ENCODE measurements at regions of chr16 and their contacts with region 1.

Region 1: DNA sequence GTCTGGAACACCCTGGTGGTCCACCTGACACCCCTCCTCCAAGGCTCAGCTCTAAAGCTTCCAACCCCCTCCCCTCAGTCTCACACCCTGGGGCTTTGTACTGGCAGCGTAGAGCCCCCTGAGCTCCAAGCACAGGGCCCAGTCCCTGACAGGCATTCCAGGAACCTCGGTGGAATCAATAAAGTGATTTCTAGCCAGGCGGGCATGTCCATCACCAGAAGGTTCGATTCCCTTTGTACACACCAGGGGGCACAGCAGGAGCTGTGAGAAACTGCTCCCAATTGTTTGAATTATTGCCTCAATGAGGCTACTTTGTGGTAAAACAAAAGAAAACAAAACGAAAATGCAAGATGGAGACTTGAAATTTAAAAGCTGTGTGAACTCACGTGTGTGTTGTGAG is 51.8 kb downstream of the SMPD3 start:
- DNase-seq: peak; percentile 72
- H3K4me3 Mint-ChIP-seq: no peak overlapping the region
- H3K27ac Mint-ChIP-seq: peak overlapping the region; percentile 27
- H3K4me1 Mint-ChIP-seq: peaks cover 18% of the 10 kb centered on the region
- H3K27me3 Mint-ChIP-seq: no peaks in the 10 kb centered on the region

Region 2: GRCh38 chr16:68406451-68407152 is 10.1 kb after region 1 on chr16:
- CTCF ChIA-PET with region 1: interaction called, 16 read pairs
- intact Hi-C with region 1: no loop called
- DNase-seq: no peak
- H3K4me3 Mint-ChIP-seq: no peak overlapping the region
- H3K27ac Mint-ChIP-seq: no peak overlapping the region
- H3K4me1 Mint-ChIP-seq: peaks cover under 1% of the 10 kb centered on the region
- H3K27me3 Mint-ChIP-seq: no peaks in the 10 kb centered on the region

Region 3: DNA sequence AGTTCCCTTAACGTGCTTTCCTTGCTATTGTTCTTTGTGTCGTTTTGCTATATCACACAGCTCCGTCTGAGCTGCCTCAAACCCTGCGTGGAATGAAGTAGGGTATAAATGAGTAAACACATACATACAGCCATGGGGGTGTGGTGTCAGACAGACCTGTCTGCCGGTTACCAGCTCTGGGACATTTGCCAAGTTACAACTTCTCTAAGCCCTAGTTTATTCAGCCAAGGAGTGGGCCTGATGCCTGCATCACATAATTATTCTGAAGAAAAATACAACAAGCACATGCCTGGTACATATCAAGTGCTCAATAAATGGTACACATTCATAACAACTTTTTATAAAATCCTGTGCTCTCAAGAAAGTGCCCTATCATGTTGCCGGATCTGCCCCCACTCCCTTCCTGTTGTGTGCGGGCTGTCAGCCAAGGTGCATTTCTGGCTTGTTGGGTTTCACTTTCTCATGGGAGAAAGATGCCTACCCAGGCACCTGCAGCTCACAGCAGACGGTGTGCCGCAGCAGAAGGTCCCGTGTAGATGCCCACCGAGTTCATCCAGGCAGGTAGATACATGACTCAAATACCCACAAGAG is 21.3 kb after region 1 on chr16:
- CTCF ChIA-PET with region 1: interaction called, 11 read pairs
- intact Hi-C with region 1: loop called (anchors 2 kb)
- DNase-seq: peak; percentile 89
- H3K4me3 Mint-ChIP-seq: peak overlapping the region; percentile 66
- H3K27ac Mint-ChIP-seq: peak overlapping the region; percentile 92
- H3K4me1 Mint-ChIP-seq: peaks cover 52% of the 10 kb centered on the region
- H3K27me3 Mint-ChIP-seq: no peaks in the 10 kb centered on the region

Region 4: DNA sequence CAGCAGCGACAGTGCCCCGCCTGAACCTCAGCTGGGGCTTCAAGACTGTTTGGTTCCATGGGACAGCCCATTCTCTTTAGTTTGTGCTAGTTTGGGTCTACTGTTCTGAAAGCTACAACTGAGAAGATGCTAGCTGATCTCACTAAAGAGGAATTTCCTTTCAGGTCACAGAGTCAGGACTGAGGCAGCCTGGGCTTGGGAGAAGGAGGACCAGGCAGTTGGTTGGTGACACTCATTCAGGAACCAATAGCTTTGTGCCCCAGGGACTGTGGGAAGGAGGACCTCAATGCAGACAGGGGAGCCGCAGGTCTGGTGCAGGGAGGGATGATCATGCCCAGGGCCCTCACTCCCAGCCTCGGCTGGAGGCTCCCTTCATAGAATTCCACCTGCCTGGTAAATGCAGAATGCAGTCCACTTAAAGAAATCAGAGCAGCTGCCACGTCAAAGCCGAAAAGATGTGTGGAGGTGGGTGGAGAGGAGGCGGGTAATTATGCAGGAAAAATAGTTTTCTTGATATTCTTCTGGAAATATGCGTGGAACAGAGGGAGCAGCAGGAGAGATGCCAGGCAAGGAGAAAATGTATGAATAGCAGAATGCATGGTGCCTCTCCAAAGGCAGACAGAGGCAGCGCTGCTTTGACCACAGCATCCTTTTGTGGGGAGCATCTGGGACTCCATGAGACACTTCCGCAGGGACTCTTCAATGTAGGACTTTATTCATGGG is 110.0 kb after region 1 on chr16:
- CTCF ChIA-PET with region 1: interaction called, 56 read pairs
- intact Hi-C with region 1: loop called (anchors 1 kb)
- DNase-seq: no peak
- H3K4me3 Mint-ChIP-seq: no peak overlapping the region
- H3K27ac Mint-ChIP-seq: no peak overlapping the region
- H3K4me1 Mint-ChIP-seq: peaks cover 2% of the 10 kb centered on the region
- H3K27me3 Mint-ChIP-seq: no peaks in the 10 kb centered on the region

Region 5: GRCh38 chr16:68512183-68512582 is 115.7 kb after region 1 on chr16:
- CTCF ChIA-PET with region 1: interaction called, 56 read pairs
- intact Hi-C with region 1: loop called (anchors 1 kb)
- DNase-seq: no peak
- H3K4me3 Mint-ChIP-seq: no peak overlapping the region
- H3K27ac Mint-ChIP-seq: no peak overlapping the region
- H3K4me1 Mint-ChIP-seq: peaks cover 2% of the 10 kb centered on the region
- H3K27me3 Mint-ChIP-seq: no peaks in the 10 kb centered on the region